ENCODE measurements at regions of chr16 and their contacts with region 1.

Region 1: GRCh38 chr16:64051824-64052223 is 1070.0 kb downstream of the CDH11 start:
- DNase-seq: peak; percentile 37
- ATAC-seq: peak; percentile 61
- H3K4me3 ChIP-seq: no peak overlapping the region
- H3K27ac ChIP-seq: no peak overlapping the region
- H3K4me1 ChIP-seq: no peaks in the 10 kb centered on the region
- H3K27me3 ChIP-seq: no peaks in the 10 kb centered on the region
- CTCF ChIP-seq: peak; percentile 64

Region 2: GRCh38 chr16:63361032-63361624 is 690.7 kb before region 1 on chr16:
- CTCF ChIA-PET with region 1: no interaction called
- POLR2A ChIA-PET with region 1: no interaction called
- intact Hi-C with region 1: loop called (anchors 2 kb)
- DNase-seq: peak; percentile 52
- ATAC-seq: peak; percentile 37; the same call in 1 of the 2 replicates
- H3K4me3 ChIP-seq: no peak overlapping the region
- H3K27ac ChIP-seq: no peak overlapping the region
- H3K4me1 ChIP-seq: no peaks in the 10 kb centered on the region
- H3K27me3 ChIP-seq: no peaks in the 10 kb centered on the region
- CTCF ChIP-seq: peak; percentile 78

Region 3: GRCh38 chr16:63461248-63461841 is 590.5 kb before region 1 on chr16:
- CTCF ChIA-PET with region 1: no interaction called
- POLR2A ChIA-PET with region 1: no interaction called
- intact Hi-C with region 1: loop called (anchors 5 kb)
- DNase-seq: peak; percentile 59
- ATAC-seq: no peak; the same call in 1 of the 2 replicates
- H3K4me3 ChIP-seq: no peak overlapping the region
- H3K27ac ChIP-seq: no peak overlapping the region
- H3K4me1 ChIP-seq: no peaks in the 10 kb centered on the region
- H3K27me3 ChIP-seq: no peaks in the 10 kb centered on the region
- CTCF ChIP-seq: peak; percentile 57

Measured in PC-3 (cell line).